Ascending aorta (tissue), 2 donors: ENCODE measurements at regions of chr17 and their contacts with region 1.

Region 1: DNA sequence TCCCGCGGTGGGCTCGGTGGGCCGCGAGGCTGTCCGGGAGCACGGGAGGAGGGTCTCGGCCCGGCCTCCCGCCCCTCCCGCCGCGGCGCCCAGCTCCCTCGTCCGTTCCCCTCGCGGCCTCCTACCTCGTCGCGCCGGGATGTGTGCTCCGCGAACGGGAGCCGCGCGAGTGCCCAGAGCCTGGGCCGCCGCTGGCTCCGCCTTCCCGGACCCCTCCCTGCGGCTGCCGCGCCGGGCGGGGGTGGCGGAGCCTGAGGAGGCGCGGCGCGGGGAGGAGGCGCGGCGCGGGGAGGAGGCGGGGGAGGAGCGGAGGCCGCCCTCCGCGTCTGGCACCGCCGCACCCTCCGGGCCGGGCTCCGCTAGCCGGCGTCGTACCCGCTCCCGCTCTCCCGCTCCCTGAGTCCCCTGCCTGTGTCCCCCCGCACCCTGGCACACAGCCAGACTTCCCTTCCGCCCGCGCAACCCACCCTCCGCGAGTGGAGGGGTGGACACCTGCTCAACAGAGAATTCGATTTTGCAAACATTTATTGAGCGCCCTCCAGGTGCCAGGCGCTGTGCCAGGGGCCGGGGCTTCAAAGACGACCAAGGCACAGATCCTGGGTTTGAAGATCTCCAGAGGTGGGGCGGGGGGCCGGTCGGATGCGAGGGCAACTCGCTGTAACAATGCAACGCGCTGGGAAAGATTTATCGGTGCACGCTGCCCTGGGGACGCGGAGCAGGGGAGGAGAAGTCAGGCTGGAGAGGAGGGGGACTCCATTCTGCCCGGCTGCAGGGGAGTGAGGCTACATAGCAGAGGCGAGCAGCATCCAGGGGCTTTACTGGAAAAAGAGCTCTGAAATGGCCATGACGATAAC is at the start of gene MPP3:
- DNase-seq: peak in 1 of 2 donors; percentile 81
- H3K4me3 ChIP-seq: peak within 1 kb of the TSS; percentile 91 to 96
- H3K27ac ChIP-seq: peak within 1 kb of the TSS; percentile 73 to 79
- H3K4me1 ChIP-seq: peaks cover 0 to 12% of the 10 kb centered on the region in 2 donors
- H3K27me3 ChIP-seq: no peaks in the 10 kb centered on the region
- CTCF ChIP-seq: no peak
- total RNA-seq, gene MPP3: 37.0 TPM

Region 2: GRCh38 chr17:43846221-43846712 is 13.1 kb after region 1 on chr17:
- intact Hi-C with region 1: loop called (anchors 1 kb)
- DNase-seq: peak; percentile 21 to 92
- H3K4me3 ChIP-seq: no peak overlapping the region
- H3K27ac ChIP-seq: no peak overlapping the region
- H3K4me1 ChIP-seq: peaks cover 0 to 12% of the 10 kb centered on the region in 2 donors
- H3K27me3 ChIP-seq: no peaks in the 10 kb centered on the region
- CTCF ChIP-seq: peak; percentile 95 to 100 (median 99)